Sigmoid colon (tissue), 7 donors: ENCODE measurements at regions of chr17 and their contacts with region 1.

Region 1: GRCh38 chr17:18217412-18218015 is 7.9 kb upstream of the LLGL1 start:
- DNase-seq: peak; percentile 87
- H3K4me3 ChIP-seq: no peak overlapping the region
- H3K27ac ChIP-seq: no peak overlapping the region
- H3K4me1 ChIP-seq: peaks cover 0 to 5% (median 0%) of the 10 kb centered on the region in 4 donors
- H3K27me3 ChIP-seq: no peaks in the 10 kb centered on the region
- CTCF ChIP-seq: peak; percentile 50 to 96 (median 80)
- EP300 ChIP-seq: no peak
- POLR2A ChIP-seq: no peak

Region 2: GRCh38 chr17:18141210-18141803 is 76.2 kb before region 1 on chr17:
- intact Hi-C with region 1: loop called (anchors 5 kb)
- DNase-seq: no peak
- H3K4me3 ChIP-seq: no peak overlapping the region
- H3K27ac ChIP-seq: no peak overlapping the region
- H3K4me1 ChIP-seq: peaks cover 0 to 7% (median 2%) of the 10 kb centered on the region in 4 donors
- H3K27me3 ChIP-seq: peaks cover 0 to 21% (median 0%) of the 10 kb centered on the region in 3 donors
- CTCF ChIP-seq: peak; percentile 23 to 55 (median 42)
- EP300 ChIP-seq: no peak
- POLR2A ChIP-seq: no peak

Region 3: GRCh38 chr17:18235743-18236256 is 18.3 kb after region 1 on chr17:
- intact Hi-C with region 1: loop called (anchors 1 kb)
- DNase-seq: no peak
- H3K4me3 ChIP-seq: no peak overlapping the region
- H3K27ac ChIP-seq: no peak overlapping the region
- H3K4me1 ChIP-seq: no peaks in the 10 kb centered on the region
- H3K27me3 ChIP-seq: no peaks in the 10 kb centered on the region
- CTCF ChIP-seq: no peak
- EP300 ChIP-seq: no peak
- POLR2A ChIP-seq: no peak